ENCODE measurements at regions of chr9 and their contacts with region 1.

Region 1: DNA sequence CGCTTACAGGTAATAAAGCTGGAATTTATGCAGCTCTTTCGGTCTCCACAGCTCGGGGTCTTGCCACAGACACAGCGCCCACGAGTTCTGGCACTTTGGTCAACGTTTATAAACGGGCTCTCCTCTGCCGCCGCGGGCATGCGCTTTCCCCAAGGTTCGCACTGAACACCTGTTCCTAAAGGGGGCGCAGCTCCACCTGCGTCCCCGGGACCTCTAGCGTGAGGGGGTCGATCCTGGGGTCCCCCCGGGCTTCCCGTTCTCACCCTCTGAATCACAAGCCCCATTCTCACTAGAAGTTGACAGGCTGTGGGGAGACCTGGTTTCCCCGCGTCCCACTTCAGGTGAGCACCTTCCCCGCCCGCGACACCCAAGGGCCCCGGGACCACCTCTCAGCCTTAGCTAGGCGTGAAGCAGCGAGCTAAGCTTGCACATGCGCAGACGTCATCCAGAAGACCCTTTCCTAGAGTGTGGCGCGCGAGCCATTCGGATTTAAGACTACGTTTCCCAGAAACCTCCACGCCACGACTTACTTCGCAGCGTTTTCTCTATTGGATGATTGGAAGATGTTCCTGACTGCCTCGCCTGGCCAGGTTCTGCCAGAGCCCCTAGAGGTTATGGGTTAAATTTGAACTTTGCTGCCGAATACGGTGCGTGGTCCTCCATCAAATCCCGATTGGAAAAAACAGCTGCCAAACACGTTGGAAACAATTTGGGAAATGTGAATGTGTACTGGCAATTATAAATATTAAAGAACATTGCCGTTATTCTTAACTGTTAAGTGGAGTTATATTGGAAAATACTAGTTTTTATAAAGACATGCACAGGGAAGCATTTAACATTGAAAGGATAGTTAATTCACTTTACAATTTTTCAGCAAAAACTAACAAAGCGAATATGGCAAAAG is 21.4 kb upstream of the ZNF782 start:
- DNase-seq: peak; percentile 96
- ATAC-seq: peak; percentile 92
- H3K4me3 ChIP-seq: peak overlapping the region; percentile 53 to 74 (median 59)
- H3K27ac ChIP-seq: peak overlapping the region; percentile 71
- H3K4me1 ChIP-seq: peaks cover 18% of the 10 kb centered on the region
- H3K27me3 ChIP-seq: no peaks in the 10 kb centered on the region; a peak in 1 of 5 replicates
- CTCF ChIP-seq: peak; percentile 80
- EP300 ChIP-seq: no peak
- POLR2A ChIP-seq: peak in 1 of 2 experiments; percentile 75; a peak in 3 of 4 replicates
- RAD21 ChIP-seq: peak; percentile 39; the same call in 1 of the 2 replicates

Region 2: GRCh38 chr9:97109194-97109811 is 233.6 kb after region 1 on chr9:
- CTCF ChIA-PET with region 1: no interaction called
- POLR2A ChIA-PET with region 1: no interaction called
- in situ Hi-C with region 1: no loop called
- intact Hi-C with region 1: loop called (anchors 5 kb)
- DNase-seq: peak; percentile 64
- ATAC-seq: peak; percentile 87
- H3K4me3 ChIP-seq: no peak overlapping the region
- H3K27ac ChIP-seq: no peak overlapping the region
- H3K4me1 ChIP-seq: 0 out of 2 replicates have a peak, but pooled peaks cover 4% of the 10 kb centered on the region
- H3K27me3 ChIP-seq: 0 out of 5 replicates have a peak, but pooled peaks cover 0 to 6% of the 10 kb centered on the region in 2 experiments
- CTCF ChIP-seq: peak; percentile 74
- EP300 ChIP-seq: no peak
- POLR2A ChIP-seq: no peak
- RAD21 ChIP-seq: no peak

Region 3: DNA sequence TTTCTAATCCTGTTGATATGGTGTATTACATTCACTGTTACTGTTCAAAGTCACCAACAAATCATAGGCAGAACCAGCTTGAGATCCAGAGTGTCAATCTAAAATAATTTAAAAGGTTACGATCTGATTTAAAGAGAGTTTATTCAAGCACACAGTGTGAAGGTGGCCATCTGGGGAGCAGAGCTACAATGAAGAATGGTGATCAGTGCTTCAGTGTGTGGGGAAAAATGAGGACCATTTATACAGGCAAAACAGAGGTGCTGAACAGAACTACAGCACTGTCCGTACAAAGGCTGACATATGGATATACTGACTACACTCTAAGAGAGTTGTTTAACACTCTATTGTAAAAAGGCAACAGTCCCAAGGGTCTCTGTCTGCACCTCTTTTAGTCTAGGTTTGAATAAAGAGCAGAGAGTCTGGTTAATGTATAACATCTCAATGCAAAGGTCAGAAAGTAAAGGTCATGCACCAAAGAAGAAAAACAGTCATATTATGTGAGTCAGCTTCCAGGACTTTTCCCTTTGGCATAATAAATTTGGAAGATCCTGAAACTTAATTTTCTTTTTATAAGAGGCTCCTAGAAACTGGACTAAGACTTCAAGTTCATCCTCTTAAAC is 506.5 kb after region 1 on chr9:
- CTCF ChIA-PET with region 1: no interaction called
- POLR2A ChIA-PET with region 1: no interaction called
- in situ Hi-C with region 1: no loop called
- intact Hi-C with region 1: no loop called
- DNase-seq: peak; percentile 91
- ATAC-seq: peak; percentile 75
- H3K4me3 ChIP-seq: peak overlapping the region; percentile 17 to 32 (median 25); a peak in 3 of 6 replicates
- H3K27ac ChIP-seq: peak overlapping the region; percentile 90
- H3K4me1 ChIP-seq: peaks cover 75% of the 10 kb centered on the region
- H3K27me3 ChIP-seq: no peaks in the 10 kb centered on the region
- CTCF ChIP-seq: no peak
- EP300 ChIP-seq: peak in 1 of 2 experiments; percentile 77; a peak in 2 of 4 replicates
- POLR2A ChIP-seq: peak in 1 of 2 experiments; percentile 70; a peak in 2 of 4 replicates
- RAD21 ChIP-seq: no peak

Measured in HepG2 (cell line).